Head of caudate nucleus (tissue), 42 donors: ENCODE measurements at regions of chr13 and their contacts with region 1.

Region 1: DNA sequence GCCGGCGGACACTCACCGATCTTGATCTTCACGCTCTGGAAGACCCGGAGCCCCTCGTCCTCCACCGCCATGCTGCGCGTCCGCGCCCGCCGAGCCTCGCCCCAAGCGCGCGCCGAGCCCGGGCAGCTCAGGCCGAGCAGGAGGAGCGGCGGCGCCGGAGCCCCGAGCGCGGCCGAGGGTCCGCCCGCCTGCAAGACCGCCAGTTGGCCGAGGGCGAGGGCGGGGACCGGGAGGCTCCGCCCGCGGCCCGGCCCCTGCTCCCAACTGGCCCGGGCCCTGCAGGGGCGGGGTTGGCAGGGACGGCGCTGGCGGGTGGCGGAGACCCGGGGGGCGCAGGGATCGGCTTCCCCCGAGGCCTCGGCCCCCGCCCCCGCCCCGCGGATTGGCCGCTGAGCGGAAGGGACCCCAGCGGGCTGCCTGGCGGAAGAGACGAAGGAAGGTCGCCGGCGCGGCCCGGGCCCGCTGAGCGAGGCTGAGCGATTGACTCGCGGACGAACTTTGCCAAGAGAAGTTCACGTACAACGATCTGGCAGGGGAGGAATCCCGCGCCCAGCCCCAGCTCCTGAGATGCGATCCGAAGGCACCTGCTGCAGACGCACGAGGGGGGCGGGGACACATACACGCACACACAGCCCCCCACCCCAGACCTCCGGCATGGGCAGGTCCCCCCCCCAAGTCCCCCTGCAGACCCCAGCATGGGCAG is at the start of gene RASA3:
- DNase-seq: peak in 40 of 42 donors; percentile 46 to 88 (median 76)

Region 2: GRCh38 chr13:114035583-114036531 is 96.7 kb before region 1 on chr13:
- intact Hi-C with region 1: loop called (anchors 10 kb)
- DNase-seq: peak; percentile 72 to 96 (median 88)